OCI-LY7 (cell line): ENCODE measurements at regions of chr12 and their contacts with region 1.

Region 1: GRCh38 chr12:92363295-92364146 is 217.9 kb upstream of the BTG1 start:
- DNase-seq: peak; percentile 96
- H3K4me3 ChIP-seq: peak overlapping the region; percentile 70
- H3K27ac ChIP-seq: peak overlapping the region; percentile 99
- H3K4me1 ChIP-seq: peaks cover 69% of the 10 kb centered on the region
- CTCF ChIP-seq: no peak; the same call in 1 of the 2 replicates

Region 2: DNA sequence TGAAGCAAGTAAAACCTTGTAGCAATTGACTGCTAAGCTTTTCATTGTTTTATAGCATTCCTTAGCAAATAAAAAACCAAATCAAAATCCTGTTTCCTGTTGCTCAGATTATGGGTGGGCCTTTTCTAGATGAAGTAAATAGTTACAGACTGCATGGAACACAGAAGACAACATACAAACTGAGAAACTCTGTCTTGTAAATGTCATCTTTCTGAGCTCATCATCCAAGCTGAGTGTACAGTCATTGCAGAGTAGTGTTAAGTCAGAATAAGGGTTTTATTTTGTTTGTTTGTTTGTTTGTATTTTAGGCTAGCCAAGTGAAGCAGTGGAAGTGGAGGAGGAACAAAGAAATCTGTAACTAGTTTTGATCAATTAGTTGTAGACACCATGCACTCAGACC is 193.5 kb before region 1 on chr12:
- CTCF ChIA-PET with region 1: interaction called, 4 read pairs
- POLR2A ChIA-PET with region 1: interaction called, 17 read pairs
- intact Hi-C with region 1: loop called (anchors 1 kb)
- DNase-seq: no peak
- H3K4me3 ChIP-seq: no peak overlapping the region
- H3K27ac ChIP-seq: no peak overlapping the region
- H3K4me1 ChIP-seq: peaks cover 35% of the 10 kb centered on the region
- CTCF ChIP-seq: no peak

Region 3: DNA sequence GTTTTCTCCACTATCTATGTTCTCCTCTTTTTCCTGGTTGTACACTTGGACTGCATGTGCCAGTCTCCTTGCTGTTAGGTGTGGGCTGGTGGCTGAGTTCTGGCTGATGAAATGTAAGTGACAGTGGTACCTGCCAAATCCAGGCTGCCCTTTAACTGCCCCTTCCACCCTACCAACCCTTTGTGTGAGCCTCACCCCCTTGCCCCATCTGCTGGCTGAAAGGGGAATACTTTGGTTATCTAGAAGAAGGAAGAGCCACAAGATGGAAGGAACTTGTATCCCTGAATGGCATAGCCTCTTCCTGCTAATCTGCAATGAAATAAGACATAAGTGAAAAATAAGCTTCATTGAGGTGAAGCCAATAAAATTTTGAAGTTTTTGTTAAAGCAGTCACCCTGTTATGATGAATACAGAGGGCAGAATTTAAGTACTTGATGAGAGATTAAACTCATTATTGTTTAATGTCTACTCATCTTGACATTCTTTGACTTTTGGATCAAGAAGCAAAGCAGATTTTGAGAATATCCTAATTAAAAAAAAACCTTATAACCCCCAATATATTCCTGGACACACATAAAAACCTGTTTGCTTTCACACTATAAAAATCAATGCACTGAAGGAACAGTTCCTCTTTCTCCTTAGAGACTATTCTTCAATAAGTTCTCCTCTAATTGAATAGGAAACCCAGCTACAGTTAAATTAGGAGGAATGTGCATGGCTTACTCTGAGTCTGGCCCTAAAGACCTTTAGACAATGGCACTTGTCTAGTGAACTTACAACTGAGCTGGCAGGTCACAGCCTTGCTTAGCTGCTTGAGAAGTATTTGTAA is 44.8 kb after region 1 on chr12:
- CTCF ChIA-PET with region 1: interaction called, 8 read pairs
- POLR2A ChIA-PET with region 1: interaction called, 76 read pairs
- intact Hi-C with region 1: loop called (anchors 1 kb)
- DNase-seq: peak; percentile 81
- H3K4me3 ChIP-seq: no peak overlapping the region
- H3K27ac ChIP-seq: peak overlapping the region; percentile 12
- H3K4me1 ChIP-seq: peaks cover 52% of the 10 kb centered on the region
- CTCF ChIP-seq: peak; percentile 93

Region 4: DNA sequence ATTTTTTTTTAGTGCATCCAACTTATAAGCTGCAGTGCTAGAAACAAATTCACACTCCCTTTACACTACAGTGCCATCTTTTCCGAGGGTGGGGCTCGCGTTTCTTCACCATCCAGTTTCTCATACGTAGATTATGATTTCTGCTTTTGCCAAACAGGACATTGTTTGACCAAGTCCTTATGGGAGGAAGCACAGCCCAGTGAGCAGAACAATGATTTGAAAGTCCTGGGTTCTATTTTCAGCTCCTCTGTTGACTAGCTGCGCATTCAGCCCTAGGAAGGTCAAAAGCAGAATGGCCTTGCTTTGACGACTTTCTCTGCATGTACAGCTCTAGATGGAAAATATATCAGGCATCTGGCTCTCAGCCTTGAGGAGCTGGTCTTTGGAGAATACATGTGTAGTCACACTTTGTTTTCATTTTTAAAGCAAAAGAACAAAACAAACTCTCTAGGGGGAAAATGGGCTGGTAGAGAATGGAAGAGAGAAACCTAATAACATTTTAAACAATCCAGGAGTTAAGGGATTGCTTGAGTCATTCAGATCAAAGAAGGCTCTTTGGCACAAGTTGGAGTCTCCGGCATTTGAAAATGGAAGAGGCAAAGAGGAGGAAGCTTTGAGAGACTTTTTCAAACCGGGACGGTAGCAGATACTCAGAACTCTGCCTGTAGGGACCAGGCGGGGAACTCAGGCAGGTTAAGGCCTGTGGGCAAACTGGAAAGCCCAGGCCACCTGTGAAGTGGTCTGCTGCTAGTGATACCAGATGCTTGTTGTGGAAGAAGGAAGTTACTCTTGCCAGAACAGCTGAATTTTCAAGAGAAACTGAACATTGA is 81.9 kb after region 1 on chr12:
- CTCF ChIA-PET with region 1: interaction called, 16 read pairs
- POLR2A ChIA-PET with region 1: interaction called, 55 read pairs
- intact Hi-C with region 1: loop called (anchors 1 kb)
- DNase-seq: peak; percentile 98
- H3K4me3 ChIP-seq: peak overlapping the region; percentile 58
- H3K27ac ChIP-seq: peak overlapping the region; percentile 99
- H3K4me1 ChIP-seq: peaks cover 65% of the 10 kb centered on the region
- CTCF ChIP-seq: no peak

Region 5: DNA sequence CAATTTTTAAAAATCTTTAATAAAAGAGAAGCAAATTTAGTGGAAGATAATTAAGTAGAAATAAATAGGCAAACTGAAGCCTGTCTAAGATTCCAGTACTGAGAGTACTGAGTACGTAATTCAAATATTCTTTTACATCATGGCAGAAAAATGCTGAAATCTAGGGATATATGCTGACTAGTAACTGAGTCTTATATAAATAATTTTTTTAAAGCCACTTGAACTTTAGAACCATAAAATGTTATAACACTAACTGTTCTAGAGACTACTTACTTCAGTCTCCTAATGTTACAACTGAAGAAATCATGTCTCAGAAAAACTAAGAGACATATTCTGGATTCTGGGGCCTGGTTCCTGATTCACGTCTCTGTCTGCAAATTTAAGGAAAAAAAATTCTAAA is 108.7 kb after region 1 on chr12:
- CTCF ChIA-PET with region 1: interaction called, 3 read pairs
- POLR2A ChIA-PET with region 1: interaction called, 39 read pairs
- intact Hi-C with region 1: loop called (anchors 1 kb)
- DNase-seq: no peak
- H3K4me3 ChIP-seq: peak overlapping the region; percentile 70
- H3K27ac ChIP-seq: peak overlapping the region; percentile 98
- H3K4me1 ChIP-seq: peaks cover 69% of the 10 kb centered on the region
- CTCF ChIP-seq: no peak

Region 6: DNA sequence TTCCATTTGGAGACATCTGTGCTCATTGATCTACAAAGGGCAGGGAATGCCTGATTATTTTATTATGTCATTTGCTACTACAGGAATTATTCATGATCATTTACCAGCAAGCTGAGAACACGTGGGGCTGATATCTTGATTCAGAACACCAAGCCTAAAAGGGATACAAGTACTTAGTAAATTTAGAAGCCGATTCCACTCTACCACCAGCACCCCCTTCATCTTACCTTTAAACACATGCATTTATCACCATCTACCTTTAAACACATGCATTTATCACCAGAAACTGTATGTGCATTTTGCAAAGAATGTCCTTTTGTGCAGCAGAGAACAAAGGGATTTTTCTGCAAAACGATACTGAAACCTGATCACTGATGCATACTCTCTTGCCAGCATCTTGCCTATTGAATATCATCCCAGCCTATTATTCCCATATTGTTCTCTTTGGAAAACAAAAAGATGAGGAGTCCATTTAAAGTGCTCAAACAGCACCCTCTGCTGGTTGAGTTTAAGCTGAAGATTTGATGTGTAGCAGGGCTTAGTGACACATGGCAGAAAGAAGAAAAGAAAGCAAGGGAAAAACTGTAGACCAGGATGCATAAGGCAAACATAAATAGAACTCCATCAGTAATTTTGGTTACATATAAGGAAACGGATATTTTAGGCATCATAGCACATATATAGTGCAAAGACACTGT is 206.7 kb after region 1 on chr12:
- CTCF ChIA-PET with region 1: no interaction called
- POLR2A ChIA-PET with region 1: interaction called, 5 read pairs
- intact Hi-C with region 1: loop called (anchors 1 kb)
- DNase-seq: peak; percentile 85
- H3K4me3 ChIP-seq: peak overlapping the region; percentile 22
- H3K27ac ChIP-seq: peak overlapping the region; percentile 26
- H3K4me1 ChIP-seq: peaks cover 40% of the 10 kb centered on the region
- CTCF ChIP-seq: peak; percentile 100